Mammary epithelial cell (primary cell): ENCODE measurements at regions of chr18 and their contacts with region 1.

Region 1: DNA sequence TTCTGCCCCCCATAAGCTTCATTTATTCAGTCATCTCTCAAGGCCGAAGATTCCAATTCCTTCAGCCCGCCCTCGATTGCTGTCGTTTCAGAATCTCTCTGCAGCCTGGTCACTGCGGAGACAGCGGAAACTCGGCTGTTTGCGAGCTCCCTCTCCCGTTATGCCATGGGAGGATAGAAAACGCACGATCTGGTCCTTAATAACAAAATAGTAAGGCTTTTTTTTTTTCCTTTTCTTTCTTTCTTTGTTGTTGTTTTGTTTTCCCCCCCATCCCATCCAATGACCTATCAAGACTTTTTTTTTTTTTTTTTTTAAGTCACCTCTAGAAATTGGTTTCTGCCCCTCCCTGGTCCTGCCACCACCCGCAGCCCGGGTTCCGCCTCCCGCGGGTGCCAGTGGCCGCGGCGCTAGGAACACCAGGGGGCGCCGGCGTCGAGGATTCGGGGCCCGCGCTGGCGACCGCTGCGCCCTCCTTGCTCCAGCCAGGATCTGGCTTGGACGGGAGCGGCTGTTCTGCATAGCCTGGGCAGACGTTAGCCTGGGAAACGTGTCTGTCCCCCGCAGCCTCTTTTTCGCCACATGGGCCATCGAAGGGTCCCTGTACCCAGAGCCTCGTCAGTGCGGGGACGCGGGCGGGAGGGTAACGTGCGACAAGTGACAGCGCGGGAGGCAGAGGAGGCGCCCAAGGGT is 10.1 kb downstream of the CPLX4 start:
- DNase-seq: peak; percentile 54
- H3K4me3 ChIP-seq: peak overlapping the region; percentile 20 to 43 (median 42)
- H3K27ac ChIP-seq: no peak overlapping the region
- H3K4me1 ChIP-seq: peaks cover 5% of the 10 kb centered on the region
- H3K27me3 ChIP-seq: no peaks in the 10 kb centered on the region
- CTCF ChIP-seq: peak; percentile 57 to 83

Region 2: DNA sequence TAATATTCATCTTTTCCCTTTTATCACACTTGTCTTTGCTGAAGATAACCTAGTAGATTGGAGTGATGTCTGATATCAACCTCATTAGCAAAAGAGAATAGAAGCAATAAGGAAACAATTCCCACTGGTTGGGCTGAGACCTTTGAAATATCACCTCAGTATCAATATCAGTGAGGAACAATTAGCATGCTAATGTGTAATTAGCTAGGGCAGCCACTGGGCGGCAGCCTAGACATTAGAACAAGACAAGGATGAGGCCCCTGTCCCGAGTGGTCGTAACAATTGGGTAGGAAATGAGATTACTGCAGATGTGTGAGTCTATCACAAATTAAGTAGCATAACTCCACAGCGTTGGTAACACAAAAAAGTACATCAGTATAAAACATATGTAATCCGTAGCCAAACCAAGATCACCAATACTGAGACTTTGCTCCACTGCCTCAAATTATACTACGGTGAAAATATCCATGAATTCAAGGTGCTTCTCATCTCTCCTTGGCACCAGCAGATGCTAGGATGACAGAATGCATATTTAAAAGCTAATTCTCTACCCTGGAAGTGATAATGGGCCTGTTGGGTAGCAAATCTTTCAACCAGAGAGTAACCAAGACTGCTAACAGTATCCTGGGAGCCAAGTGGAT is 778.6 kb before region 1 on chr18:
- CTCF ChIA-PET with region 1: no interaction called
- dilution Hi-C with region 1: no loop called
- in situ Hi-C with region 1: no loop called
- intact Hi-C with region 1: no loop called
- DNase-seq: no peak
- H3K4me3 ChIP-seq: no peak overlapping the region
- H3K27ac ChIP-seq: no peak overlapping the region
- H3K4me1 ChIP-seq: peaks cover 8% of the 10 kb centered on the region
- H3K27me3 ChIP-seq: no peaks in the 10 kb centered on the region
- CTCF ChIP-seq: peak; percentile 88 to 93

Region 3: DNA sequence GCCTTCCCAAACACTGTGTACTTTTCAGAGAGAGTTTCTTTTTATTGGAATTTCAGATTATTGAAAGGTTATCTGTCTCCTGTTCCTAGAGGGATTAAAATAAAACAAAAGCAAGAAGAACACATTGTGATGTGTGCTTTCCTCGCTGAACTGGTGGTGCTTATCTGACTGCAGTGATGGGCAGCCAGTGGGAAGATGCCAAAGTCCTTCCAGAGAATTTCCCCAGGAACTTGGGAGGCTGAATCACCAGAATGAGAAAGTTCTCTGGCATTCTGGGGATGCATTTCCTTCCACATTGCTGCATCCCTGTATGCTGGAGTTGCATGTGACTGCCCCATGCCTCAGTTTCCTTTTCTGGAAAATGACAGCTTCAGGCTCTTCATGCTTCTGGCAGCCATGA is 222.6 kb before region 1 on chr18:
- CTCF ChIA-PET with region 1: no interaction called
- dilution Hi-C with region 1: no loop called
- in situ Hi-C with region 1: no loop called
- intact Hi-C with region 1: loop called (anchors 1 kb)
- DNase-seq: no peak
- H3K4me3 ChIP-seq: no peak overlapping the region
- H3K27ac ChIP-seq: no peak overlapping the region
- H3K4me1 ChIP-seq: no peaks in the 10 kb centered on the region
- H3K27me3 ChIP-seq: no peaks in the 10 kb centered on the region
- CTCF ChIP-seq: no peak

Region 4: DNA sequence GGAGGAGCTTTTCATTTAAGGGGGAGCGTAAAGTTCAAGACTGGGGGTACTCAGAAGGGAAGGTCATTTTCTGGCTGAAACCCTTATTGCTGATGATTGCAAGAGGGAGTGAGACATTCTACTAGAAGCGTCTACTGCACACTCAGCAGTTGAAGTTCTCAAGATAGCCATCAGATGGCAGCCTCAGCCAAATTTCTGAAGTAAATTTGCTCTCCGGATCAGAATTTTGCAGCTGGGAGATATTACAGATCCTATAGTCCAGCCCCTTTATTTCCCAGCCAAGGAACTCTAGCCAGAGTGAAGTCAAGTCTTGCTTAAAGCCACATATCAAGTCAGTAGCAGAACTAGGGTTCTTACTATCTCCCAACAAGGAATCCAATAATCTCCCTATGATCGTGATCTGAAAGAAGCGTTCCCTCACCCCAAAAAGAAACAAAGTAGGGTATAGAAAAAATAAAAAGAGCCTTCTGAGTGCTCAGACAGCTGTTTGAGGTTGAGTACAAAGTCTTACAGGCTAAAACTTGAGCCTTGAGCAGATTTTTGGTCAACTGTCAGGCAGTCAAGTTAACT is 59.1 kb before region 1 on chr18:
- CTCF ChIA-PET with region 1: no interaction called
- dilution Hi-C with region 1: no loop called
- in situ Hi-C with region 1: no loop called
- intact Hi-C with region 1: loop called (anchors 1 kb)
- DNase-seq: peak; percentile 52
- H3K4me3 ChIP-seq: no peak overlapping the region
- H3K27ac ChIP-seq: no peak overlapping the region
- H3K4me1 ChIP-seq: no peaks in the 10 kb centered on the region
- H3K27me3 ChIP-seq: peaks cover 3% of the 10 kb centered on the region
- CTCF ChIP-seq: peak; percentile 73 to 84

Region 5: DNA sequence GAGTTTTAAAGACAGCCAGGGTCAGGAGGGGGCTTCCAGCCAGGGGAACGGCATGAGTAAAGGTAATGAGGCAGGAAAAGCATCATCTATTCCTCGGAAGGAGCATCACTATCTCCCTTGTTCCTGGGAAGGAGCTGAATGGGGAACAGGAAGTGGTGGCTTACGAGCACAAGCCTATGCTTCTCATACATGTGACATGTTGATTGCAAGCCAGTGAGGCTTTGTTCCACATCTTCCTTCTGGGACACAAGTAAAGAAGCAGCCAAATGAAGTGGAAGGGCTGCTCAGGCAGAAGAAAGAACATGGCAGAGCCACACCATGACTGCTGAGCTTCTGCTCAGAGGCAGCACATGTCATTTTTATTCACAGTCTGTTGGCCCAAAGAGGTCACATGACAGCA is 65.7 kb after region 1 on chr18:
- CTCF ChIA-PET with region 1: no interaction called
- dilution Hi-C with region 1: loop called (anchors 5 kb)
- in situ Hi-C with region 1: no loop called
- intact Hi-C with region 1: no loop called
- DNase-seq: no peak
- H3K4me3 ChIP-seq: no peak overlapping the region
- H3K27ac ChIP-seq: no peak overlapping the region
- H3K4me1 ChIP-seq: no peaks in the 10 kb centered on the region
- H3K27me3 ChIP-seq: no peaks in the 10 kb centered on the region
- CTCF ChIP-seq: no peak

Region 6: DNA sequence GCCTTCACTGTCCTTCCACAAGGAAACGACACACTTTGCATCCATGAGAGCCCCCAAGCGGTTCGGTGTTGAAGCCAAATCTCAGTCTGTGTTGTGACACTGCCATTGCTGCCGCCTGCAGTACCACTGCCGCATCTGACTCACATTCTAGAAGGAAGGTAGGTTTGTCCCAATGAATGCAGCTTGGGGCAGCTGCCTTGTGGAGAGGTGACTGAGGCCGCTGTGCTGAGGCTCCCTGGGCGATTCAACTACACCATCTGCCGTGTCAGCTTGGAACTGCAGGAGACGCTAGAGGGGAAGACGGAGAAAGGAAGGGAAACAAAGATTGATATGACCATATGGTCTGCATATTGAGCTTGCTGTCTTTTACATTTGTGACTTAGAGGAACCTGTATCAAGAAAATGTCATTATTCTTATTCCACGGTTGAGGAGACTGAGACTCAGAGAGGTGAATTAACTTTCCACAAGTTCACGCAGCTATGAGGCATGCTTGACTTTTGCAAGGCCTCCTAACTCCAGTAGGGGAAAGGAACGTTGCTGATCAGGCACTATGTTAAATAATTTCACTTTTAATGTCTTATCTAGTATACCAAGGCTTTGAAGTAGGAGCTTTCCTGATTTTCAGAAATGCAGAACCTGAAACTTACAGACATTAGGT is 94.2 kb after region 1 on chr18:
- CTCF ChIA-PET with region 1: interaction called, 98 read pairs
- dilution Hi-C with region 1: no loop called
- in situ Hi-C with region 1: loop called in 1 of 2 experiments (anchors 5 kb)
- intact Hi-C with region 1: loop called (anchors 2 kb)
- DNase-seq: peak; percentile 81
- H3K4me3 ChIP-seq: no peak overlapping the region
- H3K27ac ChIP-seq: no peak overlapping the region
- H3K4me1 ChIP-seq: no peaks in the 10 kb centered on the region
- H3K27me3 ChIP-seq: no peaks in the 10 kb centered on the region
- CTCF ChIP-seq: peak; percentile 95 to 99